ENCODE measurements at regions of chr6 and their contacts with region 1.

Region 1: DNA sequence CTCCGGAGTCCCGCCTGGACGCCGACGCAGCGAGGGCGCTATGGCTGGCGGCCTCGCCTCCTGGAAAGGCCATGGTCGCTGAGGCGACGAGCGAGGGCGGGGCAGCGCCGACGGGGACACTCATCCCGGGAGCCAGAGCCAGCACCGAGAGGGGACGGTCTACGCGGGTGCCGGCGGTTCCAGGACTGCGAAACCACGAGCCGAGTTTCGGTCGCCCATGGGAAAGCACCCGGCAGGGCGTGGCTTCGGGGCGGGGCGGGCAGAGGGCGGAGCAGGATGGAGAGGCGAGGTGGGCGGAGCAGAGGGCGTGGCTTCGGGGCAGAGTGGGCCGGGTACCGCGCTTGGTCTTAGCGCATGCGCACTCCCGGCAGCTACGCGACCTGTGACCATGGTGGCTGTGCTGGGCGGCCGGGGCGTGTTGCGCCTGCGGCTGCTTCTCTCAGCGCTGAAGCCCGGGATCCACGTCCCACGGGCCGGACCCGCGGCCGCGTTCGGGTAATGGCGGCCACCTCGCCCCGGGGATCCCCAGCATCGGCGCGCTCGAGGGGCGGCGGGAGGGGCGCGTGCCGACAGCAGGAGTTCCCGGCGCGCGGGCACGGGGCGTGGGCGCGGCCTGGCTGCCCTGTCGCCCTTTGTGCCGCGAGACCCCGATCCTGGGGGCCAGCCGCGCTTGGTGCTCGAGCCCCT is at the start of gene BPHL:
- DNase-seq: peak; percentile 99
- H3K4me3 Mint-ChIP-seq: peak within 1 kb of the TSS; percentile 82
- H3K27ac Mint-ChIP-seq: peak within 1 kb of the TSS; percentile 78
- H3K4me1 Mint-ChIP-seq: peaks cover 23% of the 10 kb centered on the region
- H3K27me3 Mint-ChIP-seq: no peaks in the 10 kb centered on the region
- total RNA-seq, gene BPHL: 6.6 and 7.9 TPM in 2 replicates

Region 2: DNA sequence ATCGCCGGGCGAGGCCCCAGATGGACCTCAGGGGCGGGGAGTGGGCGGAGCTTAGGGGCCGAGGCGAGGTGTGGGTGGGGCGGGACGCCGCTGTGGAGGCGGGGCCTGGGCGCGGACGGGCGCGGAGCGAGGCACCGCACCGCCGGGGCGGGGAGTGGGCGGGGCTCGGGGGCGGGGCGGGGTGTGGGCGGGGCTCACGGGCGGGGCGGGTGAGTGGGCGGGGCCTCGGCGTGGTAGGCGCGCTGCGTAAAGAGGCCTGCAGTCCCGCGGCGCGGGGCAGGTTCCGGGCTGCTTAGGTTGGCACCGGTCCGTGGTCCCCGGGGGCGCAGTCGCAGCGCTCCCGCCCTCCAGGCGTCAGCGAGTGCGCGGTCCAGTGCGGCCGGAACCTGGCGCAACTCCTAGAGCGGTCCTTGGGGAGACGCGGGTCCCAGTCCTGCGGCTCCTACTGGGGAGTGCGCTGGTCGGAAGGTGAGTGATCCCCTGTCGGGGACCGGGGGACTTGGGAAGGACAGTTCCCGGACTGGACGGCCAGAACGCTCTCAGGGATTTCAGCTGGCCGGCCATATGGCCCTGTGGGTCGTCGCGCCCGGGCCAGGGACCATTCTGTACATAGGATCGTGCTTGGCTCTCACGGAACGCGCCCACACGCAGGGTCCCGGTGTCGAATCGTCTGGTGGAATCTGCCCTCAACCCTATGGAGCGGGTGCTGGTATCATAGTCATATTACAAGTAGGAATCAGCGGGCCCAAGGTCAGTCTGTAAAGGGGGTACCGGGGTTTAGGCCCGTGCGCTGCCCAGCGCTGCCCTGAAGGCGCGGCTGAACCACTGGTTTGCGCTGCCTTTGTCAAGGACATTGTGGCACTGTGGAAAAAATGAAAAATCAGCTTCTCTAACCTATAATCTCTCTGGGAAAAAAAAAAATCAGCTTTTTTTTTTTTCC is 118.6 kb before region 1 on chr6 and contains the start of gene NQO2:
- intact Hi-C with region 1: loop called (anchors 1 kb)
- DNase-seq: peak; percentile 83
- H3K4me3 Mint-ChIP-seq: peak within 1 kb of the TSS; percentile 90
- H3K27ac Mint-ChIP-seq: peak within 1 kb of the TSS; percentile 90
- H3K4me1 Mint-ChIP-seq: peaks cover 38% of the 10 kb centered on the region
- H3K27me3 Mint-ChIP-seq: peaks cover 3% of the 10 kb centered on the region
- total RNA-seq, gene NQO2: 30.2 and 34.8 TPM in 2 replicates

Region 3: DNA sequence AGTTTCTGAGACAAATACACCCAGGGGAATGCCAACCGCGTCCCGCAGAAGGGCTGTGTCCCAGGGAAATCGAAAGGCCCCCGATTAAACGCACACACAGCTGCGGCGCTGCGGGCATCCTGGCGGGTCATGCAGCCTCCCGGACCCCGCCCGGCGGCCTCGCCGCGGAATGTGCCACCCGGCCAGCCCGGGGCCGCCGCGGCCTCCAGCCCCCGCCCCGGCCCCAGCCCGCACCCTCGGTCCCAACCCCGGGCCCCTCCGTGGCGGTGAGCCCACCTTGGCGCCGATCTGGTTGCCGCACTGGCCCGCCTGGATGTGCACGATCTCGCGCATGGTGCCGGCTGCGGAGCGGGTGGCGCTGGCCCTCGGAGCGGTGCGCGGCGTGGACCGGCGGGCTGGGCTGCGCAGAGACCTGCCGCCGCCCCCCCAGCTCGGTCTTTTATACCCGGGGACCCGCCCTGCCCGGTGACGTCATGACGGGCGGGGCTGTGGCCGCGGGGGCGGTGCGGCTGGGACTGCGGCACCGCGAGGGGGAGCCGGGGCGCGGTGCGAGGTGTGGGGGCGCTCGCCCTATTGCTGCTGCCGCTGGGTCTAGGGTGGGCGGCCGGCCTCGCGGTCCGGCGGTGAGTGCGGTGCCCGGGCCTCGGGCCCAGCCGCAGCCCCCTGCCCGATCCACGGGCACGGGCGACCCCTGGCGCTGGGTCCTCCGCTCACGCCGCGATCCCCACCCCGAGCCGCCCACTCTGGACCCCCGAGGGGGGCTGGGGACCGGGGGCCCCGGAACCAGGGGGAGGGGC is 38.8 kb after region 1 on chr6 and contains the start of gene TUBB2A:
- intact Hi-C with region 1: loop called (anchors 2 kb)
- DNase-seq: peak; percentile 83
- H3K4me3 Mint-ChIP-seq: peak within 1 kb of the TSS; percentile 86
- H3K27ac Mint-ChIP-seq: peak within 1 kb of the TSS; percentile 76
- H3K4me1 Mint-ChIP-seq: peaks cover 22% of the 10 kb centered on the region
- H3K27me3 Mint-ChIP-seq: peaks cover 54% of the 10 kb centered on the region
- total RNA-seq, gene TUBB2A: 5.2 and 5.6 TPM in 2 replicates

Region 4: DNA sequence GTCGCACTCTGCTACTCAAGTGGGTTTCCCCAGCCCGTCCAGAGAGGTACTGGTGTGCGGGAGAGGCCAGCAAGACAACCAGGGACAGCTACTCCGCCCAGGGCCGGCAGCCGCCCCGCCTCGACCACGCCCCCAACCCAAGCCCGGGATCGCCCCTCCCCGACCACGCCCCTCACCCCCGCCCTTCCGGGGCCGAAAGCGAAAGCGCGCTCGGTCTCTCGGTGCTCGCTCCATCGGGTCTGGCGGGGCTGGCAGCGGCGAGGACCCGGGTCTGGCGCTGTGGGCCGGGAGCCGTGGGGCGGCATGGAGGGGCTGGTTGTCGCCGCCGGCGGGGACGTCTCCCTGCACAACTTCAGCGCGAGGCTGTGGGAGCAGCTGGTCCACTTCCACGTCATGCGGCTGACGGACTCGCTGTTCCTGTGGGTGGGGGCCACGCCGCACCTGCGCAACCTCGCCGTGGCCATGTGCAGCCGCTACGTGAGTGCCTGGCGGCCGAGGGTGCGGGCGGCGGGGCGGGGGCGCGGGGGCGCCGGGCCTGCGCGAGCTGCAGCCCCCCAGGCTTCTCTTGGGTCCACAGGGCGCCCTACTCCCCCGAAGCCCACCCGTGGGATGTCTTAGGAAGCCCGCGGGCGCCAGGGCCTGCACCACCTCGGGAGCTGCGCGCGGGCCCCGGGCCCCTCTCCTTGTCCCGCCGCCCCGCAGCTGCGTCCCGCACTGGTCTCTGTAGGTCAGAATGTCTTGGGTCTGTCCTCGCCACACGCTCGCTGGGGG is 140.4 kb after region 1 on chr6 and contains the start of gene PSMG4:
- intact Hi-C with region 1: loop called (anchors 1 kb)
- DNase-seq: peak; percentile 91
- H3K4me3 Mint-ChIP-seq: peak within 1 kb of the TSS; percentile 99
- H3K27ac Mint-ChIP-seq: peak within 1 kb of the TSS; percentile 95
- H3K4me1 Mint-ChIP-seq: peaks cover 39% of the 10 kb centered on the region
- H3K27me3 Mint-ChIP-seq: peaks cover 11% of the 10 kb centered on the region
- total RNA-seq, gene PSMG4: 32.1 and 35.4 TPM in 2 replicates

Region 5: GRCh38 chr6:4018172-4018905 is 899.8 kb after region 1 on chr6:
- intact Hi-C with region 1: loop called (anchors 2 kb)
- DNase-seq: peak; percentile 96
- H3K4me3 Mint-ChIP-seq: peak overlapping the region; percentile 99
- H3K27ac Mint-ChIP-seq: peak overlapping the region; percentile 100
- H3K4me1 Mint-ChIP-seq: peaks cover 60% of the 10 kb centered on the region
- H3K27me3 Mint-ChIP-seq: no peaks in the 10 kb centered on the region

Measured in activated T-helper 1 cell treated with anti-CD3 and anti-CD28 coated beads, Interleukin-12 subunit alpha, Interleukin-12 subunit beta, Interleukin-2, Interleukin-4 antibody, amounts not matched to agents 30 ng/mL and 10 ng/mL and 1 ng/mL, durations not matched to agents 14 hours and 24 hours and 36 hours (primary cell).